ENCODE measurements at regions of chr1 and their contacts with region 1.

Region 1: GRCh38 chr1:72262735-72263134 is 19.6 kb downstream of the NEGR1 start:
- DNase-seq: no peak
- H3K4me3 ChIP-seq: no peak overlapping the region
- H3K27ac ChIP-seq: no peak overlapping the region
- H3K4me1 ChIP-seq: no peaks in the 10 kb centered on the region
- H3K27me3 ChIP-seq: no peaks in the 10 kb centered on the region
- CTCF ChIP-seq: no peak

Region 2: GRCh38 chr1:72579629-72580028 is 316.9 kb after region 1 on chr1:
- CTCF ChIA-PET with region 1: interaction called, 11 read pairs
- POLR2A ChIA-PET with region 1: no interaction called
- intact Hi-C with region 1: no loop called
- DNase-seq: no peak
- H3K4me3 ChIP-seq: no peak overlapping the region
- H3K27ac ChIP-seq: no peak overlapping the region
- H3K4me1 ChIP-seq: no peaks in the 10 kb centered on the region
- H3K27me3 ChIP-seq: no peaks in the 10 kb centered on the region
- CTCF ChIP-seq: no peak